HEK293T (cell line): ENCODE measurements at regions of chr1 and their contacts with region 1.

Region 1: GRCh38 chr1:166910396-166910994 is 34.4 kb upstream of the TADA1 start:
- DNase-seq: peak; percentile 82

Region 2: DNA sequence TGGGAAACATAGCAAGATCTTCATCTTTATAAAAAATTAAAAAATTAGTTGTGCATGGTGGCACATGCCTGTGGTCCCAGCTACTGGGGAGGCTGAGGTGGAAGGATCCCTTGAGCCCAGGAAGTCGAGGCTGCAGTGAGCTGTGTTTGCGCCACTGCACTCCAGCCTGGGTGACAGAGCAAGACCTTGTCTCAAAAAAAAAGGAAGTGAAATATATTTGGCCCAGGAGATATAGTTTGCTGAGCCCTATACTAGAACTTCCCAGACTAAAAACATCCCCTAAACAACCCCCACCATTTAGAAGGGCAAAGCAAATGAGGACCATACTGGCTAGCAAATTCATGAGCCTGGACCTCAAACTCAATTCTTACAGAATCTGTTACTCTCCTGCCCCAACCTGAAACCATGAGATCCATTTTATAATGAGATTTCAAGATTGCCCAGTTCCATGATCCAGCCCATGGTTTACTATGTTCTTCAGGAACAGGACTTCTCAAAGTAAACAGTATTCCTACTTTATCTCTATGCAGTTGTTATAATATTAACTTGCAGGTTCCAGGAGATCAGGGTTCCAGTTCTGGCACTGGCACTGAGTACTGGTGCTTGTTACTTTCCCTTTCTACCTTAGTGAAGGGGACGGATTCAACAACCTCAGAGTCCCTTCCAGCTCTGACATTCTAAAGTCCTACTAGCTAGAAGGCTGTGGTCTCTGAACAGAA is 14.5 kb after region 1 on chr1:
- CTCF ChIA-PET with region 1: no interaction called
- POLR2A ChIA-PET with region 1: no interaction called
- DNase-seq: no peak

Region 3: GRCh38 chr1:167059045-167059808 is 148.7 kb after region 1 on chr1:
- CTCF ChIA-PET with region 1: interaction called, 163 read pairs
- POLR2A ChIA-PET with region 1: interaction called, 6 read pairs
- DNase-seq: peak; percentile 77

Region 4: GRCh38 chr1:167090314-167090942 is 179.9 kb after region 1 on chr1 and contains the start of gene GPA33:
- CTCF ChIA-PET with region 1: no interaction called
- POLR2A ChIA-PET with region 1: no interaction called
- DNase-seq: no peak